ENCODE measurements at regions of chr3 and their contacts with region 1.

Region 1: GRCh38 chr3:38136777-38137614 is at the start of gene ACAA1:
- DNase-seq: peak; percentile 99
- H3K4me3 ChIP-seq: peak within 1 kb of the TSS; percentile 27 to 71 (median 67)
- H3K27ac ChIP-seq: peak within 1 kb of the TSS; percentile 45
- H3K4me1 ChIP-seq: peaks cover 24% of the 10 kb centered on the region
- H3K27me3 ChIP-seq: no peaks in the 10 kb centered on the region
- CTCF ChIP-seq: no peak
- POLR2A ChIP-seq: peak; percentile 90
- total RNA-seq, gene ACAA1: 46.9 and 52.1 TPM in 2 replicates

Region 2: GRCh38 chr3:38067508-38068233 is 69.3 kb before region 1 on chr3:
- CTCF ChIA-PET with region 1: no interaction called
- POLR2A ChIA-PET with region 1: no interaction called
- dilution Hi-C with region 1: no loop called
- intact Hi-C with region 1: no loop called
- DNase-seq: no peak
- H3K4me3 ChIP-seq: no peak overlapping the region
- H3K27ac ChIP-seq: no peak overlapping the region
- H3K4me1 ChIP-seq: no peaks in the 10 kb centered on the region
- H3K27me3 ChIP-seq: peaks cover 0 to 2% of the 10 kb centered on the region in 2 experiments
- CTCF ChIP-seq: no peak
- POLR2A ChIP-seq: no peak

Region 3: DNA sequence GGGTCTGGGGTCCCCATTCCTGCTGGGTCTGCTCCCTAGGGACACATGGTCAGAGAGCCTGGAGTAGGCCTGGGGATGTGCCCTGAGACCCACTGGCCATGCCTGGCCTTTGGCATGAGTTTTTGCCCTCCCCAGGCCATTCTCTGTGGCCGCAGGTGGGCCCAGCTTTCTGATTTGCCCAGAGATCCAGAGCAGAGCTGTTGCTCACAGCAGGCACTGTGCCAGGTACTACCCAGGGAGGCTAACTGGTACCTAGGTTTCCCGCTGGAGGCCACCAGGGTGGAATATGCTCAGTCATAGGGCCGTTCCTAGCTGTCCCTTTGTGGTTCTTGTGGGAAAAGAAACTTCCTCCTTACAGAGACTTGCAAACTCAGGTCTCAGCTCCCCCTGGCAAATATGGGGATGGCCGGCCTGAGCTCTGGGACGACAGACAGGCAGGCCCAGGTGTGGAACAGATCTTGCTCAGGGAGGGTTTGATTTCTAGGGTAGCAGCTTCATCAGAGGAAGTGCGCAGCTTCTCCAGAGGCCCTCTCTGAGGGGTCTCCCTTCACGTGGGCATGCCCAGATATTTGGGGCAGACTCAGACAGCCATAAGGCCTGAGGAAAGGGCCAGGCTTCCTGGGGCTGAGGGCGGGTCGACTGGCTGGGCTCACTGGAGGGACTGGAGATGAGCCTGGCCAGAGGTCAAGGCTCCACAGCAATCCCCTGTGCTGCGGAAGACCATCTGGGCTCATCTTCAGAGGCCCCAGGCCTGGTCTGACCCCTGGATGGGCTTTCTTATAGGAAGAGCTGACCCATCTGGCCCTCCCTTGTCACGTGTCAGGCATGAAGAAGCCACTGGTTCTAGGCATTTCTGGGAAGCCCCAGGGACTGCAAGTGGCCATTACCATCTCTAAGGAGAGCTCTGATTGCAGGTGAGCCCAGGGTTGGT is 28.1 kb before region 1 on chr3:
- CTCF ChIA-PET with region 1: no interaction called
- POLR2A ChIA-PET with region 1: no interaction called
- dilution Hi-C with region 1: no loop called
- intact Hi-C with region 1: no loop called
- DNase-seq: no peak
- H3K4me3 ChIP-seq: no peak overlapping the region
- H3K27ac ChIP-seq: no peak overlapping the region
- H3K4me1 ChIP-seq: no peaks in the 10 kb centered on the region
- H3K27me3 ChIP-seq: peaks cover 2 to 3% of the 10 kb centered on the region in 2 experiments
- CTCF ChIP-seq: no peak
- POLR2A ChIP-seq: no peak

Region 4: GRCh38 chr3:38164966-38165680 is 28.1 kb after region 1 on chr3 and contains the start of gene OXSR1:
- CTCF ChIA-PET with region 1: interaction called, 43 read pairs
- POLR2A ChIA-PET with region 1: interaction called, 22 read pairs
- dilution Hi-C with region 1: no loop called
- intact Hi-C with region 1: loop called (anchors 1 kb)
- DNase-seq: peak; percentile 100
- H3K4me3 ChIP-seq: peak within 1 kb of the TSS; percentile 62 to 88 (median 86)
- H3K27ac ChIP-seq: peak within 1 kb of the TSS; percentile 81
- H3K4me1 ChIP-seq: peaks cover 4% of the 10 kb centered on the region
- H3K27me3 ChIP-seq: no peaks in the 10 kb centered on the region
- CTCF ChIP-seq: no peak
- POLR2A ChIP-seq: peak; percentile 85
- total RNA-seq, gene OXSR1: 32.9 and 34.3 TPM in 2 replicates

Region 5: DNA sequence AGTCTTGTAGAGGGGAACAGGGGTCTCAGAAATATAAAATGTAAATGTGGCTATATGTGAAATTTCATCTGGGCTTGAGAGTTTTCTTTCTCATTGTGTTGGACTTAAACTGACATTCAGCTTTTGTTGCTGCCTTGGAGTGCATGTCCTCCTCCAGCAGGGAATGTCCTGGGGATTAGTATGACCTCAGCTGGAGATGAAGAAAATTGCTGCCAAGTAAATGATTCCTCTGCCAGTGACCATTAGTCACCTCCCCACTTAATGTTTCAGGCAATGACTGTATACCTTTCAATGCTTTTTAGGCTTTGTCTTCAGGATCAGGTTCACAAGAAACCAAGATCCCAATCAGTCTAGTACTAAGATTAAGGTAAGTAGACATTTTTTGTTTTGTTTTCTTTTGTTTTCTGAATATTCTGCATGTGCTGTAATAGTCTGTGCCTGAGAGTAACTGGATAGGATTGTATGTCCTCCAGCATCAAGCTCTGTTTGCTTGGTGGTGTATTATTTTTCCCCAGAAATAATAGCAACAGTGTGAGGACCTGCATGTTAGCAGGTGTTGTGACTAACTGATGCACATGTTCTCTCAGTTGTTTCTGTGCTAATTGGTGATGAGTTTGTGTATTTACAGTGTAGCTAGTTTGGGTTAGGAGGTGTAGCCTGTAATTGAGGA is 110.5 kb after region 1 on chr3:
- CTCF ChIA-PET with region 1: interaction called, 14 read pairs
- POLR2A ChIA-PET with region 1: no interaction called
- dilution Hi-C with region 1: no loop called
- intact Hi-C with region 1: loop called (anchors 2 kb)
- DNase-seq: peak; percentile 74
- H3K4me3 ChIP-seq: no peak overlapping the region
- H3K27ac ChIP-seq: no peak overlapping the region
- H3K4me1 ChIP-seq: no peaks in the 10 kb centered on the region
- H3K27me3 ChIP-seq: no peaks in the 10 kb centered on the region
- CTCF ChIP-seq: peak in 1 of 2 donors; percentile 13
- POLR2A ChIP-seq: no peak

Region 6: DNA sequence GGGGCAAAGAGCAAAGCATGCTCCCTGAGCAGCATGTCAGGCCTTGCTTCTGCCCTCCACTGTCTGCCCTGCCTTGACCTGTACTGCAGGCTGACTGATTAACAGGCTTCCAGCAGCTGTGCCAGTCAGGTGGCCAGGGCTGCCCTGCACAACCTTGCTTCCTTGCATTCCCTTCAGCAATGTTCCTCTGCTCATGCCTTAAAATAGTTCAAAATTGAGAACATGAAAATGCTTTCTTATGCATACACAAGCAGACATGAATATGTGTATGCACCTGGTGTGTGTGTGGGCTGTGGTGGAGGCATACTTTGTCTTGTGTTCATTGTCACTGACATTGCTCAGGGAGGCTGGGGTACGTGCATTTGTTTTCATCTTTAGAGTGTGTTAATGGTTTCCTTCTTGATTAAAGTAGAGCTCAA is 127.4 kb after region 1 on chr3:
- CTCF ChIA-PET with region 1: no interaction called
- POLR2A ChIA-PET with region 1: no interaction called
- dilution Hi-C with region 1: no loop called
- intact Hi-C with region 1: no loop called
- DNase-seq: no peak
- H3K4me3 ChIP-seq: no peak overlapping the region
- H3K27ac ChIP-seq: no peak overlapping the region
- H3K4me1 ChIP-seq: no peaks in the 10 kb centered on the region
- H3K27me3 ChIP-seq: no peaks in the 10 kb centered on the region
- CTCF ChIP-seq: no peak
- POLR2A ChIP-seq: no peak

Region 7: GRCh38 chr3:38346587-38347410 is 209.8 kb after region 1 on chr3 and contains the start of gene XYLB:
- CTCF ChIA-PET with region 1: interaction called, 13 read pairs
- POLR2A ChIA-PET with region 1: no interaction called
- dilution Hi-C with region 1: no loop called
- intact Hi-C with region 1: loop called (anchors 1 kb)
- DNase-seq: peak; percentile 81
- H3K4me3 ChIP-seq: peak within 1 kb of the TSS; percentile 53 to 96 (median 58)
- H3K27ac ChIP-seq: no peak within 1 kb of the TSS
- H3K4me1 ChIP-seq: no peaks in the 10 kb centered on the region
- H3K27me3 ChIP-seq: no peaks in the 10 kb centered on the region
- CTCF ChIP-seq: peak; percentile 81 to 95
- POLR2A ChIP-seq: peak; percentile 28
- total RNA-seq, gene XYLB: 4.3 and 6.1 TPM in 2 replicates

Region 8: GRCh38 chr3:38479431-38480092 is 342.6 kb after region 1 on chr3:
- CTCF ChIA-PET with region 1: no interaction called
- POLR2A ChIA-PET with region 1: no interaction called
- dilution Hi-C with region 1: no loop called
- intact Hi-C with region 1: loop called (anchors 5 kb)
- DNase-seq: peak; percentile 64
- H3K4me3 ChIP-seq: no peak overlapping the region
- H3K27ac ChIP-seq: no peak overlapping the region
- H3K4me1 ChIP-seq: no peaks in the 10 kb centered on the region
- H3K27me3 ChIP-seq: no peaks in the 10 kb centered on the region
- CTCF ChIP-seq: peak; percentile 77 to 84
- POLR2A ChIP-seq: no peak

Region 9: GRCh38 chr3:38651154-38651789 is 514.3 kb after region 1 on chr3:
- CTCF ChIA-PET with region 1: interaction called, 3 read pairs
- POLR2A ChIA-PET with region 1: no interaction called
- dilution Hi-C with region 1: no loop called
- intact Hi-C with region 1: loop called (anchors 10 kb)
- DNase-seq: peak; percentile 71
- H3K4me3 ChIP-seq: no peak overlapping the region
- H3K27ac ChIP-seq: no peak overlapping the region
- H3K4me1 ChIP-seq: peaks cover 10% of the 10 kb centered on the region
- H3K27me3 ChIP-seq: no peaks in the 10 kb centered on the region
- CTCF ChIP-seq: peak; percentile 93 to 100
- POLR2A ChIP-seq: no peak

Measured in endothelial cell of umbilical vein (primary cell).